ENCODE measurements at regions of chr17 and their contacts with region 1.

Region 1: GRCh38 chr17:3913531-3914311 is 2.5 kb downstream of the P2RX1 start:
- DNase-seq: peak; percentile 87
- ATAC-seq: peak; percentile 64
- H3K4me3 Mint-ChIP-seq: peak overlapping the region; percentile 82
- H3K27ac Mint-ChIP-seq: peak overlapping the region; percentile 96
- H3K4me1 Mint-ChIP-seq: peaks cover 90% of the 10 kb centered on the region
- H3K27me3 Mint-ChIP-seq: no peaks in the 10 kb centered on the region
- CTCF ChIP-seq: peak; percentile 55

Region 2: DNA sequence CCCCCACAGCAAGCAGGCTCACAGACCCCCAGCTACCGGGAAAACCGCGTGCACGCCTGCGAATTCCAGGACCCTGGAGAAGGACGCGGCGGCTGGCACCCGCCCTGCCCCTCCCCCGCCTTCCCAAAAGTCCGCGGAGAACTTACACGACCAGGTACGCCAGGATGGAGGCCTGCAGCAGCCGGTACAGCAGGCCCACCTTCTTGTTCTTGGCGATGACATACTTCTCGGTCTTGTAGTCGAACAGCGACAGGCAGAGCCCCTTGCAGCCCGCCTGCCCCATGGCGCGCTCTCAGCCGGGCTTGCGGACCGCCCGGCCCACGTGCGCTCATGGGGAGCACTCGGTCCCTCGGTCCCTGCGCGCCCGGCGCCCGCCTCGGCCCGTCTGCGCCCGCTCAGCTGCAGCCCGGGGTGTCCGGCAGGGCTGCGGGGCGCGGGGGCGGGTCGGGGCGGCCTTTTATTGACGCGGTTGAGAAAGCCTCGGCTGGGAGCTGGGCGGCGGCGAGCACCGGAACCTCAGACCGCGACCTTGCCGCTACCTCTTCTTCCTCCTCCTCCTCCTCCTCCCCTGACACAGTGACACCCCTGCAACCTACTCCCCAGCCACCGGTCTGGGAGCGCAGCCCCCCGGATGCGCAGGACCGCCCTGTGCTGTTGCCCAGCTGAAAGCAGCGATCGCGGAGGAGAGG is 217.9 kb before region 1 on chr17 and contains the start of gene P2RX5:
- CTCF ChIA-PET with region 1: no interaction called
- POLR2A ChIA-PET with region 1: interaction called, 11 read pairs
- intact Hi-C with region 1: loop called (anchors 5 kb)
- DNase-seq: peak; percentile 66
- ATAC-seq: peak; percentile 58
- H3K4me3 Mint-ChIP-seq: peak within 1 kb of the TSS; percentile 99
- H3K27ac Mint-ChIP-seq: peak within 1 kb of the TSS; percentile 97
- H3K4me1 Mint-ChIP-seq: peaks cover 77% of the 10 kb centered on the region
- H3K27me3 Mint-ChIP-seq: no peaks in the 10 kb centered on the region
- CTCF ChIP-seq: no peak
- total RNA-seq, gene P2RX5: 295 and 349 TPM in 2 replicates

Region 3: DNA sequence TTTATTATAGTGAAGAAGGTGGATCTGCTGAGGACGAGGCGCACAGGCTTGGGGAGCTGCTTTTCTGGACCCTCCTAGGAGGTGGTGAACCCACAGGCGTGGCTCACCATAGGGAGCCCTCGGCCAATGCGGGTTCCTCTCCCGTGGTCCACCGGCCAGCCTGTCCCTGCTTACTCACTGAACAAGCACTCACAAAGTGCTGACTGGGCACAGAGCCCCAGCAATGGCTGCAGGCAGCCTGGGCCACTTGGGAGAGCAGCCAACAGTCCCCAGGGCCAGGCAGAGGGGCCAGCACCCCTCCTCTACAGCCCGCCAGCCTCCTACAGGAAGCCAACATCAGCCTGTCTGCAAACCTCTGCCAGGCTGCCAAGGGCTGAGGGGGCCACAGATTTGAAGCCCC is 48.5 kb before region 1 on chr17:
- CTCF ChIA-PET with region 1: interaction called, 10 read pairs
- POLR2A ChIA-PET with region 1: interaction called, 3 read pairs
- intact Hi-C with region 1: loop called (anchors 1 kb)
- DNase-seq: no peak
- ATAC-seq: no peak
- H3K4me3 Mint-ChIP-seq: no peak overlapping the region
- H3K27ac Mint-ChIP-seq: no peak overlapping the region
- H3K4me1 Mint-ChIP-seq: no peaks in the 10 kb centered on the region
- H3K27me3 Mint-ChIP-seq: no peaks in the 10 kb centered on the region
- CTCF ChIP-seq: no peak

Region 4: DNA sequence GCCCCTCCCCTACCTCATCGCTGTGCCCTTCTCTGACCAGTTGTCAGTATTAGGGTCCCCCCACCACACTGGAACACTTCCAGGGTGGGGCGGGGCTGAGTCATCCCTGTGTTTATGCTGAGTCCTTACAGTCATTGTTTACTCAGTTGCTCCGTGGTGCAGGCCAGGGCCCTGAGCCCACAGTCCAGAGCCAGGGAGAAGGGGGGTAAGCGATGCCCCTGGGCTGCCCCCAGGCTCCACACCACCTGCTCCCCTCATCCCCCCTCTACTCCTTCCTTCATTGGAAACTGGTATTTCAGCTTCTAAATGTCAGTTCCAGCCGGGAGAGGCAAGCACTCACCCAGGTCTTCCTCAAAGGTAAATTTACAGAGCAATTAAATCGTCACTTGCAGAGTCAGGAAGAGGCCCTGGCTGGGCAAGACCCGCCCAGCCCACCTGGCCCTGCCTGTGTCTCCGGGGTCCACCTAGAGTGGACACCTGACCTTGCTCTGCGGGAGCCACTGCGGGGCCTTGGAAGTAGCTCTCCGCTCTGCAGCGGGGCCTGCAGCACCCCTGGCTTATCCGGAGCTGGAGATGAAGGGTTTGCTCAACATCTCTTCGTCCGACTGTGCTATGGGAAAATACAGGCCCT is 45.7 kb after region 1 on chr17:
- CTCF ChIA-PET with region 1: interaction called, 14 read pairs
- POLR2A ChIA-PET with region 1: interaction called, 311 read pairs
- intact Hi-C with region 1: loop called (anchors 1 kb)
- DNase-seq: no peak
- ATAC-seq: no peak
- H3K4me3 Mint-ChIP-seq: peak overlapping the region; percentile 89
- H3K27ac Mint-ChIP-seq: peak overlapping the region; percentile 88
- H3K4me1 Mint-ChIP-seq: peaks cover 78% of the 10 kb centered on the region
- H3K27me3 Mint-ChIP-seq: no peaks in the 10 kb centered on the region
- CTCF ChIP-seq: no peak

Region 5: DNA sequence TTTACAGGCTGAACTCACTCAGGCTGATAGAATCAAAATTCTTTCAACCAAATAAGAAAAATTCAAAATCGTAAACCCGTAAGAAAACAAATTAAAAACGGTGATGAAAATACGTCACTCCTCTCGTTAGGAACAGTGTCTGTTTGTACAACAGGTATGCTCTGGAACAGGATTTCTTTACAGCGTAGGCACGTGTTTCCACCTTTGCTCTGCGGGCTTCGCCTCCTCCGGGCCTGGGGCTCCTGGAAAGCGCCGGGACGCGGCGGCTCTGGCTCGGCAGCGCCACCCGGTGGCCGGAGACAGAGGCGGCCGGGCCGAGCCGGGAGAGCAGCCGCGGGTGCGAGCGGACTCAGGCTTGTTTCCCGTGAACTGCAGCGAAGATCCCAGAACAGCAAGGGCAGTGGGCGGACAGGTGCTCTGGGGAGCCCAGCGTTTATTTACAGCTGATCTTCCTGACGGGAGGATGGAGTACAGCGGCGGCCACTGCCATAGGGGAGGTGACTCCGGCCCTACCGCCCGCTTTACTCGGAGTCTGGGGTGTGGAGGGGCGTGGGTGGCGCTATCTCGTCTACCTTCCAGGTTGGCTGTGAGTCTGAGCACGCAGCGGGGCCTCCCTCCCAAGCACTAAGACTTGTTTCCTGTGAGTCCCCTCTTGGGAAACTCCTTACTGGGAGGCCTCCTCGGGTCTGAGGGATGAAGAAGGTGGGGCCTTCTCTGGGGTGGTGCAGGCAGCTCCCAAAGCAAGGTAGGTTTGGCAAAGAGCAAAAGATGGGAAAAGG is 91.0 kb after region 1 on chr17:
- CTCF ChIA-PET with region 1: interaction called, 65 read pairs
- POLR2A ChIA-PET with region 1: interaction called, 21 read pairs
- intact Hi-C with region 1: loop called (anchors 1 kb)
- DNase-seq: peak; percentile 77
- ATAC-seq: peak; percentile 80
- H3K4me3 Mint-ChIP-seq: peak overlapping the region; percentile 38
- H3K27ac Mint-ChIP-seq: no peak overlapping the region
- H3K4me1 Mint-ChIP-seq: peaks cover 24% of the 10 kb centered on the region
- H3K27me3 Mint-ChIP-seq: no peaks in the 10 kb centered on the region
- CTCF ChIP-seq: peak; percentile 96

Region 6: GRCh38 chr17:4366327-4367063 is 452.8 kb after region 1 on chr17 and contains the start of gene UBE2G1:
- CTCF ChIA-PET with region 1: no interaction called
- POLR2A ChIA-PET with region 1: interaction called, 3 read pairs
- intact Hi-C with region 1: loop called (anchors 5 kb)
- DNase-seq: peak; percentile 99
- ATAC-seq: peak; percentile 81
- H3K4me3 Mint-ChIP-seq: peak within 1 kb of the TSS; percentile 86
- H3K27ac Mint-ChIP-seq: peak within 1 kb of the TSS; percentile 93
- H3K4me1 Mint-ChIP-seq: peaks cover 47% of the 10 kb centered on the region
- H3K27me3 Mint-ChIP-seq: no peaks in the 10 kb centered on the region
- CTCF ChIP-seq: no peak
- total RNA-seq, gene UBE2G1: 66.5 and 66.6 TPM in 2 replicates

Measured in activated B cell treated with CpG ODN at 0.5 μM for 24 hours (primary cell).